Activated naive CD4-positive, alpha-beta T cell treated with anti-CD3 and anti-CD28 coated beads, Interleukin-2, amount 10 ng/mL, durations not matched to agents 7 days and 5 days (primary cell): ENCODE measurements at regions of chr7 and their contacts with region 1.

Region 1: GRCh38 chr7:101507791-101508252 is 121.3 kb downstream of the MYL10 start:
- DNase-seq: peak; percentile 66
- H3K4me3 Mint-ChIP-seq: peak overlapping the region; percentile 50
- H3K27ac Mint-ChIP-seq: peak overlapping the region; percentile 9
- H3K4me1 Mint-ChIP-seq: peaks cover 22% of the 10 kb centered on the region
- H3K27me3 Mint-ChIP-seq: peaks cover 42% of the 10 kb centered on the region

Region 2: GRCh38 chr7:101363734-101364374 is 144.0 kb before region 1 on chr7:
- CTCF ChIA-PET with region 1: interaction called, 40 read pairs
- DNase-seq: peak; percentile 77
- H3K4me3 Mint-ChIP-seq: no peak overlapping the region
- H3K27ac Mint-ChIP-seq: no peak overlapping the region
- H3K4me1 Mint-ChIP-seq: no peaks in the 10 kb centered on the region
- H3K27me3 Mint-ChIP-seq: peaks cover 59% of the 10 kb centered on the region

Region 3: DNA sequence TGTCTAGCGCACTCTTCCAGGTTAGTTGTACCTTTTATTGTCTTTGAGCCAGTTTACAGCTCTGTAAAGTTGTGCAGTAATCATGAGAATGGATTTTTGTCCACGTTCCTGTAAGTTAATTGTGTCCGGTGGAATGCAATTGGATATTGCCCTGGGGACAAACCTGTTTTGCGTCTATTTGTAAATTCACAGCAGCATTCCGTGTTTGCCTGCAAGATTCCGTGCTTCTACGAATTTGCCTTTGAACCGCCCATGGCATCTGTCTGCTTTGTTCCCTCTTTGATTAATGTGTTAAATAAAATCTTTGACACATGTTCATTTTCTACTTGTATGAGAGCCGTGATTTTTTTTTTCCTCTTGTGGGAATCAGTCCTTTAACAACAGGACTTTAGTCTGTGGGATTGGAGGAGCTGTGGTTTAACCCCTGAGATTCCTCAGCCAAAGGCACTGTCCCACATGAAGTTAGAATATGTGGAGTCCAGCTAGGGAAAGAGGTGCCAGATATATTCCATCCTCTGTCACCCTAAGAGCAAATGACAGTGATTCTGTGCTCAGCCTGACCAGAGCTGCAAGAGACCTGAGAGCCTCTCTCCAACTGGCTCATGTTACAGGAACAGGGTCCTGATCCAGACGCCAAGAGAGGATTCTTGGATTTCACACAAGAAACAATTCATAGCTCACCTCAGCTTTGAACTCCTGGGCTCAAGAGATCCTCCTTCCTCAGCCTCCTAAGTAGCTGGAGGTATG is 18.8 kb before region 1 on chr7:
- CTCF ChIA-PET with region 1: no interaction called
- DNase-seq: no peak
- H3K4me3 Mint-ChIP-seq: no peak overlapping the region
- H3K27ac Mint-ChIP-seq: no peak overlapping the region
- H3K4me1 Mint-ChIP-seq: no peaks in the 10 kb centered on the region
- H3K27me3 Mint-ChIP-seq: peaks cover 16% of the 10 kb centered on the region

Region 4: DNA sequence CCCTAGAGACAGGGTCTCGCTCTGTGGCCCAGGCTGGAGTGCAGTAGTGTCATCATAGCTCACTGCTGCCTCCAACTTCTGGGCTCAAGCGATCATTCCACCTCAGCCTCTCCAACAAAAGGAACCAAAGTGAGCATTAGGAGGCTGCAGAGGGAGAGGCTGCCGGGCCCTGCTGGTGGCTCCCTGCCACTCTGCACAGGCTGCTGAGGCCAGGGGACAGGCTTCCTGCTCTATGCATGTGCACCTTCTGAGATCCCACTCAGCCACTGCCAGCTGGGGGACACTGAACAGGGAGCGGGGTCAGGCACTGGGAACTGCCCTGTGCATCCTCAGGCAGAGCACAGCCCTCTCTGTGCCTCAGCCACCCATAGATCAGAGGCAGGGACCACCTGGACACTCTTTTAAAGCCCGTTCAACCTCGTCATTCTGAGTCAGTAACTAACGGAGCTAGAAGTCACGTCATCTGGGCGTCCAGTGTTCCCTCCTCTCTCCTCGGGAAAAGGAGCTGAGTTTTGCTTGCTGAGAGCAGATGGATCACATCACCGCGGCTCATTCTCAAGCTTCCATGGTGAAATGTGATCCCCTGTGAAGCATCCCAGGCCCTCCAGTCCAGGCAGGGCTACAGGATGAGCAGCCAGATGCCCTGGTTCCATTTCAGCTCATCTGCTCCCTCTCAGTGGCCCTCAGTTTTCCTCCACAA is 11.7 kb after region 1 on chr7:
- CTCF ChIA-PET with region 1: interaction called, 12 read pairs
- DNase-seq: no peak
- H3K4me3 Mint-ChIP-seq: no peak overlapping the region
- H3K27ac Mint-ChIP-seq: no peak overlapping the region
- H3K4me1 Mint-ChIP-seq: no peaks in the 10 kb centered on the region
- H3K27me3 Mint-ChIP-seq: peaks cover 16% of the 10 kb centered on the region